ENCODE measurements at regions of chr11 and their contacts with region 1.

Region 1: GRCh38 chr11:31107062-31107461 is 262.5 kb downstream of the DCDC1 start:
- DNase-seq: peak; percentile 75
- ATAC-seq: peak; percentile 57
- H3K4me3 Mint-ChIP-seq: no peak overlapping the region
- H3K27ac Mint-ChIP-seq: no peak overlapping the region
- H3K4me1 Mint-ChIP-seq: no peaks in the 10 kb centered on the region
- H3K27me3 Mint-ChIP-seq: peaks cover 2% of the 10 kb centered on the region

Region 2: DNA sequence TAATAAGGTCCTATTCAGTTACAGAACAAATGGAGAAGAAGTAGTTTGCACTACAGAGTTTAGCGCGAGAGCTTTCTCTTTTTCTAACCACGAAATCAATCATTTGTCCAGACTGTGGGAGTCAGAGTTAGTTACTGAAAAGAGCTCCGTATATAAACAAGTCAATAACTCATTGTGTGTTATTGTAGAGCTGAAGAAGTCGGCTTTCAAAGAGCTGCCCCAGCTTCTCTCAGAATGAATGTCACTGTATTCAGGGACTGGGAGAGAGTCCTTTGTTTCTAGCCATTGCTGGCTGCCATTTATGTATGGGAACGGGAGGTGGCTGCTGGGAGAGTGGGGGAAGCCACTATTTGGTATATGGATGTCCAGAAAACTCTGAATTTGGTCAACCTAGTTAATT is 34.7 kb after region 1 on chr11:
- CTCF ChIA-PET with region 1: no interaction called
- POLR2A ChIA-PET with region 1: no interaction called
- intact Hi-C with region 1: no loop called
- DNase-seq: no peak
- ATAC-seq: no peak
- H3K4me3 Mint-ChIP-seq: no peak overlapping the region
- H3K27ac Mint-ChIP-seq: no peak overlapping the region
- H3K4me1 Mint-ChIP-seq: no peaks in the 10 kb centered on the region
- H3K27me3 Mint-ChIP-seq: no peaks in the 10 kb centered on the region

Region 3: DNA sequence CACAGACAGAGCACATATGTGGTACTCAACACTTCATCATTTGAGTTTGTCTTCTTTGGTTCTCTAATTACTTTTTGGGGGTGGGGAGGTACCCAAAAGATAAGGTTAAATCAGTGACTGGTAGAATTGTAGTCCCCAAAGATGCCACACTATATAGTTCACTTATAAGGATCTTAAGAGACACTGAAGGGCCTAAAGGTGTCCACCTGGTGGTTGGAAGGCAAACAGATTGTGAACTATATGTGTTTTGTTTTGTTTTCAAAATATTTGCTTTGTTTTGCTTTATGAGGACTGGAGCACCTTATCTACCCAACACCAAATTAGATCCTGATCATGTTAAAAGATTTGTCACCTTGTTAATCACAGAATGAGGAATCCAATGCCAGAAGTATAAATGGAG is 126.4 kb after region 1 on chr11:
- CTCF ChIA-PET with region 1: interaction called, 3 read pairs
- POLR2A ChIA-PET with region 1: no interaction called
- intact Hi-C with region 1: loop called in 1 of 2 experiments (anchors 2 kb)
- DNase-seq: no peak
- ATAC-seq: no peak
- H3K4me3 Mint-ChIP-seq: no peak overlapping the region
- H3K27ac Mint-ChIP-seq: no peak overlapping the region
- H3K4me1 Mint-ChIP-seq: no peaks in the 10 kb centered on the region
- H3K27me3 Mint-ChIP-seq: peaks cover 3% of the 10 kb centered on the region

Region 4: DNA sequence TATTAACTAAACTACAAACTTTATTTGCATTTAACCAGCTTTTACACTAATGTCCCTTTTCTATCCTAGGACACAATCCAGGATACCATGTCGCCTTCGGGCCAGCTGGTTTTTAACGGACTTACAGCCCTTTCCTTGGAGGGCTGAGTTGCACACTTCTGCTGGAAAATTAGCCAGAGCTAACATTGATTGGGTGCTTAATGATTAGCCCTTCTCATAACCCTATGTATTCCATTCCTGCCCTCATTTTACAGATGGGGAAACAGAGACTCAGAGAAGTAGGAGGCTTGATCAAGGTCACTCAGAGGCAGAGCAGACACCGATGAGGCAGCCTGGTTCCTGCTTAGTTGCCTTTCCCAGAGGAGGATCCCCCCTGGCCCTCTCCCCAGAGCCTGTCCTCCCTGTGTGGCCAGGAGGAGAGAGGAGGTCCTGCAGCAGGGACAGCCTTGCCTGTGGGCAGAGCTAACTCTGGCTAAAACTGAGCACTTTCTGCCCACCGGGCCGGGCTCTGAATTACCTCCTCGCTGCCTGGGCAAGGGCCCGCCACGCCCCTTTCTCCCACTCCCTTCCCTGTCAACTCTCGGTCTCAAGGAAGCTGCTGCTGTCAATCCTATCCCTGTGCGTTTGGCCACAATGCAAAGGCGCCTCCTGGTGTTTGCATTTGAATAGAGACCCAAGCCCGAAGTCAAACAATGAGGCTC is 763.7 kb after region 1 on chr11:
- CTCF ChIA-PET with region 1: interaction called, 3 read pairs
- POLR2A ChIA-PET with region 1: no interaction called
- intact Hi-C with region 1: loop called (anchors 2 to 5 kb)
- DNase-seq: peak; percentile 48
- ATAC-seq: no peak
- H3K4me3 Mint-ChIP-seq: no peak overlapping the region
- H3K27ac Mint-ChIP-seq: no peak overlapping the region
- H3K4me1 Mint-ChIP-seq: no peaks in the 10 kb centered on the region
- H3K27me3 Mint-ChIP-seq: peaks cover 18% of the 10 kb centered on the region

Region 5: GRCh38 chr11:31958076-31958735 is 851.1 kb after region 1 on chr11:
- CTCF ChIA-PET with region 1: interaction called, 22 read pairs
- POLR2A ChIA-PET with region 1: no interaction called
- intact Hi-C with region 1: loop called (anchors 1 to 5 kb)
- DNase-seq: peak; percentile 83
- ATAC-seq: peak; percentile 53
- H3K4me3 Mint-ChIP-seq: no peak overlapping the region
- H3K27ac Mint-ChIP-seq: no peak overlapping the region
- H3K4me1 Mint-ChIP-seq: no peaks in the 10 kb centered on the region
- H3K27me3 Mint-ChIP-seq: no peaks in the 10 kb centered on the region

Region 6: DNA sequence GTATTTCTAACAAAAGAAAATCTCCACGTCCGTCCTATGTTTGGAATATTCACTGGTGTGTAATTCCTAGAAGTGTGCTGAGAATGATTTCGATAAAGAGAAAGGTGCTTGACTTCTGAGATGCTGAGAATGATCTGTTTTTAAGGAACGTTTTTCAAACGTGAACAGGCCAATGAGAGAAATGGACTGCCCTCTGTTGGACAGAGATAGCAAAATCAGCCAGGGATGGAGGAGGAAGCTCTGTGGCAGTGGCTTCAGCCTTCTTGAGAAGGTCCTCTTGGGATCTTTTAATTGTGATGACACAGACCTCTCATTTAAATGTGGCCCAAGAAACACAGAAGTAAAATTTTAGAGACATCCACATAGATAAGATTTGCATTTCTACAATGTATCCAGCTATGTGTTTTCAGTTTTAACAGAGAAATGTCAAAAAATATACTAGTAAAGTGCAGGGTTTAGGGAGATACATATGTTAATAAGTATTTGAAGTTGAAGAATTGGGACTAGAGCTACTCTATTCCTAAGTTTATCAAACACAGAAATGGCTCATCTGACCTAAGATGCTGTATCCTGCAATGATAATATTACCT is 899.8 kb after region 1 on chr11:
- CTCF ChIA-PET with region 1: interaction called, 3 read pairs
- POLR2A ChIA-PET with region 1: no interaction called
- intact Hi-C with region 1: loop called in 1 of 2 experiments (anchors 1 kb)
- DNase-seq: peak; percentile 24
- ATAC-seq: peak; percentile 65
- H3K4me3 Mint-ChIP-seq: no peak overlapping the region
- H3K27ac Mint-ChIP-seq: no peak overlapping the region
- H3K4me1 Mint-ChIP-seq: no peaks in the 10 kb centered on the region
- H3K27me3 Mint-ChIP-seq: peaks cover 31% of the 10 kb centered on the region

Region 7: GRCh38 chr11:32176223-32176934 is 1069.3 kb after region 1 on chr11:
- CTCF ChIA-PET with region 1: interaction called, 24 read pairs
- POLR2A ChIA-PET with region 1: no interaction called
- intact Hi-C with region 1: loop called (anchors 1 to 5 kb)
- DNase-seq: peak; percentile 85
- ATAC-seq: peak; percentile 78
- H3K4me3 Mint-ChIP-seq: no peak overlapping the region
- H3K27ac Mint-ChIP-seq: no peak overlapping the region
- H3K4me1 Mint-ChIP-seq: no peaks in the 10 kb centered on the region
- H3K27me3 Mint-ChIP-seq: peaks cover 7% of the 10 kb centered on the region